IMR-90 (cell line): ENCODE measurements at regions of chr2 and their contacts with region 1.

Region 1: GRCh38 chr2:41879235-41879916 is 168.4 kb upstream of the PKDCC start:
- DNase-seq: no peak
- ATAC-seq: no peak
- H3K4me3 ChIP-seq: no peak overlapping the region
- H3K27ac ChIP-seq: no peak overlapping the region
- H3K4me1 ChIP-seq: peaks cover 4% of the 10 kb centered on the region; the same call in 1 of the 2 replicates
- H3K27me3 ChIP-seq: peaks cover 4% of the 10 kb centered on the region; the same call in 1 of the 2 replicates
- CTCF ChIP-seq: no peak
- POLR2A ChIP-seq: no peak
- RAD21 ChIP-seq: no peak

Region 2: GRCh38 chr2:41460661-41461060 is 418.7 kb before region 1 on chr2:
- CTCF ChIA-PET with region 1: no interaction called
- POLR2A ChIA-PET with region 1: no interaction called
- dilution Hi-C with region 1: no loop called
- in situ Hi-C with region 1: no loop called
- intact Hi-C with region 1: no loop called
- DNase-seq: no peak
- ATAC-seq: no peak
- H3K4me3 ChIP-seq: no peak overlapping the region
- H3K27ac ChIP-seq: no peak overlapping the region
- H3K4me1 ChIP-seq: no peaks in the 10 kb centered on the region
- H3K27me3 ChIP-seq: no peaks in the 10 kb centered on the region
- CTCF ChIP-seq: no peak
- POLR2A ChIP-seq: no peak
- RAD21 ChIP-seq: no peak

Region 3: GRCh38 chr2:41896186-41896846 is 16.9 kb after region 1 on chr2:
- CTCF ChIA-PET with region 1: no interaction called
- POLR2A ChIA-PET with region 1: interaction called, 18 read pairs
- dilution Hi-C with region 1: no loop called
- in situ Hi-C with region 1: no loop called
- intact Hi-C with region 1: no loop called
- DNase-seq: no peak
- ATAC-seq: no peak
- H3K4me3 ChIP-seq: no peak overlapping the region
- H3K27ac ChIP-seq: no peak overlapping the region
- H3K4me1 ChIP-seq: no peaks in the 10 kb centered on the region; the same call in 1 of the 2 replicates
- H3K27me3 ChIP-seq: 0 out of 2 replicates have a peak, but pooled peaks cover 4% of the 10 kb centered on the region
- CTCF ChIP-seq: no peak
- POLR2A ChIP-seq: no peak
- RAD21 ChIP-seq: no peak